ENCODE measurements at regions of chr20 and their contacts with region 1.

Region 1: GRCh38 chr20:35883778-35884540 is 70.3 kb downstream of the SCAND1 start:
- DNase-seq: peak; percentile 69 to 81 (median 79)
- ATAC-seq: peak; percentile 88 to 89
- H3K4me3 ChIP-seq: no peak overlapping the region
- H3K27ac ChIP-seq: peak overlapping the region; percentile 85
- H3K4me1 ChIP-seq: no peaks in the 10 kb centered on the region
- H3K27me3 ChIP-seq: no peaks in the 10 kb centered on the region

Region 2: DNA sequence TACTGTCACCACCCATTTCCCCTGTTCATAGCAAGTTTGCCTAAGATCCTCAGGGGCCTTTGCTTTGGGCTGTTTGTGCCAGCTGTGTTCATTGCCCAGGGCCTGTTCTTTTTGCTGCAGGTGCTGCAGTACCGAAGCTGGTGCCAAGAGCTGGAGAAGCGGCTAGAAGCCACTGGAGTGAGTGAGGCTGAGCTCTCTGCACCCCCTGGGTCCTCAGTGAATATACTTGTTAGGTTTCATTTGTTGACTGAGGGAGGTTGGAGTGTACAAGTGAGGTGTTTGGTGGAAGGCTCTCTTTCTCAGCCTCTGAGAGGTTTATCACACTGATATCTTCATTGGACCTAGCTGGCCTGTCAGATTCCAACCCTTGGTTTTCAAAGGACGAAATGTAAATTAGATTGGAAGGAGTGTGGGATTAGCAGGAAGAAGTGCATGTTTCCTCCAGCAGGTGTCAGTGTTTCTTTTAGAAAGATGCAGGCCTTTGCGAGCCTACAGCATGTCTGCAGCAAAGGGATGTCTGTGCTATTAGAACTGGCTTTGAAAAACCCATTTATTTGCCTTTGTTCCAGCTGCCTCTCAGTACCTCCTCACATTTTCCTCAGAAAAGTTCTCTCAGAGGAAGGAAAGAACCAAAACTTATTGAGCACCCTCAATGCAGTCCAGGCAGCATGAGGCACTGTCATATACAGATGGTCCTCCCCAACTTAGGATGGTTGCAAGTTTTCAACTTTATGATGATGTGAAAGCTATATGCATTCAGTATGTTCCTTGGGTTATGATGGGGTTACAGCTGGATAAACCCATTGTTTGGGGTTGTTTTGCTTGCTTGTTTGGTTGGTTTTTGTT is 420.3 kb before region 1 on chr20:
- intact Hi-C with region 1: loop called in 1 of 4 experiments (anchors 10 kb)
- DNase-seq: no peak
- ATAC-seq: peak; percentile 70 to 78
- H3K4me3 ChIP-seq: no peak overlapping the region
- H3K27ac ChIP-seq: no peak overlapping the region
- H3K4me1 ChIP-seq: no peaks in the 10 kb centered on the region
- H3K27me3 ChIP-seq: no peaks in the 10 kb centered on the region

Region 3: GRCh38 chr20:35739294-35740163 is 144.4 kb before region 1 on chr20:
- intact Hi-C with region 1: loop called in 2 of 4 experiments (anchors 10 kb)
- DNase-seq: no peak
- ATAC-seq: no peak
- H3K4me3 ChIP-seq: peak overlapping the region; percentile 87
- H3K27ac ChIP-seq: peak overlapping the region; percentile 31
- H3K4me1 ChIP-seq: peaks cover 4% of the 10 kb centered on the region
- H3K27me3 ChIP-seq: no peaks in the 10 kb centered on the region

Region 4: GRCh38 chr20:35828434-35828833 is 55.5 kb before region 1 on chr20:
- intact Hi-C with region 1: no loop called
- DNase-seq: peak; percentile 36 to 78 (median 61)
- ATAC-seq: peak; percentile 58 to 84
- H3K4me3 ChIP-seq: no peak overlapping the region
- H3K27ac ChIP-seq: peak overlapping the region; percentile 42
- H3K4me1 ChIP-seq: no peaks in the 10 kb centered on the region
- H3K27me3 ChIP-seq: no peaks in the 10 kb centered on the region

Measured in right cardiac atrium (tissue), 5 donors.